Calu3 (cell line): ENCODE measurements at regions of chr2 and their contacts with region 1.

Region 1: GRCh38 chr2:199019898-199020507 is 437.7 kb downstream of the SATB2 start:
- DNase-seq: peak; percentile 46
- H3K4me3 Mint-ChIP-seq: no peak overlapping the region
- H3K27ac Mint-ChIP-seq: no peak overlapping the region
- H3K4me1 Mint-ChIP-seq: no peaks in the 10 kb centered on the region
- H3K27me3 Mint-ChIP-seq: no peaks in the 10 kb centered on the region
- CTCF ChIP-seq: peak; percentile 55

Region 2: GRCh38 chr2:199258291-199258690 is 238.3 kb after region 1 on chr2:
- CTCF ChIA-PET with region 1: no interaction called
- intact Hi-C with region 1: loop called (anchors 1 kb)
- DNase-seq: peak; percentile 6
- H3K4me3 Mint-ChIP-seq: no peak overlapping the region
- H3K27ac Mint-ChIP-seq: no peak overlapping the region
- H3K4me1 Mint-ChIP-seq: peaks cover 10% of the 10 kb centered on the region
- H3K27me3 Mint-ChIP-seq: no peaks in the 10 kb centered on the region
- CTCF ChIP-seq: no peak

Region 3: GRCh38 chr2:199459286-199460016 is 439.4 kb after region 1 on chr2:
- CTCF ChIA-PET with region 1: interaction called, 3 read pairs
- intact Hi-C with region 1: loop called (anchors 5 kb)
- DNase-seq: peak; percentile 89
- H3K4me3 Mint-ChIP-seq: peak overlapping the region; percentile 91
- H3K27ac Mint-ChIP-seq: peak overlapping the region; percentile 89
- H3K4me1 Mint-ChIP-seq: no peaks in the 10 kb centered on the region
- H3K27me3 Mint-ChIP-seq: peaks cover under 1% of the 10 kb centered on the region
- CTCF ChIP-seq: no peak

Region 4: DNA sequence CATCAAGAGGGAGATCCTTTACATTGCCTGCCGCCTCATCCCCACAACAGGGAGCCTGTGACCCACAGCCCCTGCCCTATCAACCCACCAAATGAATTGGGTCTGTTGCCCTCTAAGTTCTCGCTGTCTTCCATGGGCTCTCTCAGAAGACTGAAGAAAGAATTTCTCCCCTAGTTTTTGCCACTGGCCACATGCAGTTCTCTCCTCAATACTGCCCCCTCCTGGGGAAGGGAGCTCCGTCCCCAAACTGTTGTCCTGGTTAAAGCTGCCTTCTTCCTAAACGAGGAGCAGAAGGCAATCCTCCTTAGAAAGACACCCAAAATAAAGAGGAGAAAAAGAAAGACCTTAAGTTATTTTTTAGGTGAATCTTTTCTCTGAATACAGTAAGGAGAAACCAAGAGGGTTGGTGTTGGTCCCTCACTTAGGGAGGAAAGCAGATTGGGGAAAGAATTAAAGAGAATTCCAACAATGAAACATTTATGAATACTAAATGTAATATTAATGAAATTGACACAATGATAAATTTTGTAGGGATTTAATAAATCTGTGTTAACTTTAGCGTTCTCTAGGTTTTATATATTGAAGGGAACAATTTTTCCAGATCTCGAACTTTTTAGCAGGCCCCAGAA is 468.9 kb after region 1 on chr2:
- CTCF ChIA-PET with region 1: interaction called, 4 read pairs
- intact Hi-C with region 1: loop called (anchors 10 kb)
- DNase-seq: peak; percentile 85
- H3K4me3 Mint-ChIP-seq: no peak overlapping the region
- H3K27ac Mint-ChIP-seq: no peak overlapping the region
- H3K4me1 Mint-ChIP-seq: no peaks in the 10 kb centered on the region
- H3K27me3 Mint-ChIP-seq: no peaks in the 10 kb centered on the region
- CTCF ChIP-seq: peak; percentile 78